A673 (cell line): ENCODE measurements at regions of chr12 and their contacts with region 1.

Region 1: GRCh38 chr12:18153826-18154225 is 63.8 kb upstream of the RERGL start:
- DNase-seq: no peak
- H3K4me3 ChIP-seq: no peak overlapping the region
- H3K27ac ChIP-seq: no peak overlapping the region
- H3K4me1 ChIP-seq: no peaks in the 10 kb centered on the region
- H3K27me3 ChIP-seq: no peaks in the 10 kb centered on the region
- CTCF ChIP-seq: no peak

Region 2: GRCh38 chr12:18057051-18057450 is 96.8 kb before region 1 on chr12:
- CTCF ChIA-PET with region 1: no interaction called
- POLR2A ChIA-PET with region 1: no interaction called
- intact Hi-C with region 1: no loop called
- DNase-seq: no peak
- H3K4me3 ChIP-seq: no peak overlapping the region
- H3K27ac ChIP-seq: no peak overlapping the region
- H3K4me1 ChIP-seq: peaks cover 3% of the 10 kb centered on the region
- H3K27me3 ChIP-seq: no peaks in the 10 kb centered on the region
- CTCF ChIP-seq: no peak

Region 3: GRCh38 chr12:18361433-18361832 is 207.6 kb after region 1 on chr12:
- CTCF ChIA-PET with region 1: no interaction called
- POLR2A ChIA-PET with region 1: no interaction called
- intact Hi-C with region 1: no loop called
- DNase-seq: peak; percentile 6
- H3K4me3 ChIP-seq: no peak overlapping the region
- H3K27ac ChIP-seq: no peak overlapping the region
- H3K4me1 ChIP-seq: peaks cover 5% of the 10 kb centered on the region
- H3K27me3 ChIP-seq: no peaks in the 10 kb centered on the region
- CTCF ChIP-seq: no peak

Region 4: DNA sequence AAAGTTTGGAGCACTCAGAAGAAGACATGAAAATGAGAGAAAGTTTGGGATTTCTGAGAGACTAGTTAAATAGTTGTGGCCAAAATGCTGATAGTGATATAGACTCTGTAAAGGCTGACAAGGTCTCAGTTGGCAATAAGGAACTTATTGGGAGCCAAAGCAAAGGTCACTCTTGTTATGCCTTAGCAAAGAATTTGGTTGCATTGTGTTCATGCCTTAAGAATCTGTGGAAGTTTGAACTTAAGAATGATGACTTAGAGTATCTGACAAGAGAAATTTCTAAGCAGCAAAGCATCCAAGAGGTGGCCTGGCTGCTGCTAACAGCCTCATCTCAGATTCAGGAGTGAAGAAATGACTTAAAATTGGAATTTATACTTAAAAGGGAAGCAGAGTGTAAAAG is 221.3 kb after region 1 on chr12:
- CTCF ChIA-PET with region 1: no interaction called
- POLR2A ChIA-PET with region 1: no interaction called
- intact Hi-C with region 1: no loop called
- DNase-seq: no peak
- H3K4me3 ChIP-seq: no peak overlapping the region
- H3K27ac ChIP-seq: no peak overlapping the region
- H3K4me1 ChIP-seq: no peaks in the 10 kb centered on the region
- H3K27me3 ChIP-seq: peaks cover 47% of the 10 kb centered on the region
- CTCF ChIP-seq: no peak

Region 5: GRCh38 chr12:18443783-18444437 is 290.1 kb after region 1 on chr12:
- CTCF ChIA-PET with region 1: no interaction called
- POLR2A ChIA-PET with region 1: no interaction called
- intact Hi-C with region 1: no loop called
- DNase-seq: no peak
- H3K4me3 ChIP-seq: no peak overlapping the region
- H3K27ac ChIP-seq: no peak overlapping the region
- H3K4me1 ChIP-seq: no peaks in the 10 kb centered on the region
- H3K27me3 ChIP-seq: no peaks in the 10 kb centered on the region
- CTCF ChIP-seq: no peak

Region 6: DNA sequence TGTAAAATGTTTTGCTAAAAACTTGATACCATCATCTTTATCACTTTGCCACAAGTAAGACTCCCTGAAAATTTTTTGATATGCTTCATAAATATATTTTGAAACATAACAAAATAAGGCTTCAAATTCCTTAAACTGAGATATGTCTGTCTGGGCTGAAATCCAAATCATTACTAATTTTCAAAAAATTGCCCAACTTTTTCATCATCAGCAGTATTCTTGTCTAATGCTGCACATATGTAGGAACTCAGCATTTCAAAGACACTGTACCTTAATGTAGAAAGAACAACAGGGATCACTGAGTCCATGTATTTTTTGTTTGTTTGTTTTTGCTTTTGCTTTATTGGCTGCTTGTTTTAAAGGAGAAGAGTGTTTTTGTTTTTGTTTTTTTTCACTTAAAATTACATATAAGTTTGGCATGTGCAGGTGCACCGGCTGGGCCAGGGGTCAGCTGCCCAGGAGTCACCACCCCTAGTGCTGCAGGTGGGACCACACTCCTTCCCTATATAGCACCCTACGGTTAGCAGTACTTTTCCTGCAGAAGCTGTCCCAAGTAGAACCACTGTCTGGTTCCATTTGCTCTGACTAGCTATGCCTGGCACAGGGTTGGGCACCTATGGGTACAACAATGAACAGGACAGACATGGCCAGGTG is 338.7 kb after region 1 on chr12:
- CTCF ChIA-PET with region 1: no interaction called
- POLR2A ChIA-PET with region 1: interaction called, 13 read pairs
- intact Hi-C with region 1: no loop called
- DNase-seq: no peak
- H3K4me3 ChIP-seq: no peak overlapping the region
- H3K27ac ChIP-seq: no peak overlapping the region
- H3K4me1 ChIP-seq: no peaks in the 10 kb centered on the region
- H3K27me3 ChIP-seq: peaks cover 3% of the 10 kb centered on the region
- CTCF ChIP-seq: no peak